Prostate gland (tissue), 2 donors: ENCODE measurements at regions of chr13 and their contacts with region 1.

Region 1: GRCh38 chr13:110915057-110915873 is at the start of gene ANKRD10:
- DNase-seq: peak; percentile 98
- H3K4me3 ChIP-seq: peak within 1 kb of the TSS; percentile 92 to 98
- H3K27ac ChIP-seq: peak within 1 kb of the TSS; percentile 97 to 99
- H3K4me1 ChIP-seq: peaks cover 14% of the 10 kb centered on the region
- H3K27me3 ChIP-seq: no peaks in the 10 kb centered on the region
- CTCF ChIP-seq: peak; percentile 85 to 99 (median 95)
- POLR2A ChIP-seq: peak; percentile 15
- total RNA-seq, gene ANKRD10: 99.9 to 155 TPM

Region 2: DNA sequence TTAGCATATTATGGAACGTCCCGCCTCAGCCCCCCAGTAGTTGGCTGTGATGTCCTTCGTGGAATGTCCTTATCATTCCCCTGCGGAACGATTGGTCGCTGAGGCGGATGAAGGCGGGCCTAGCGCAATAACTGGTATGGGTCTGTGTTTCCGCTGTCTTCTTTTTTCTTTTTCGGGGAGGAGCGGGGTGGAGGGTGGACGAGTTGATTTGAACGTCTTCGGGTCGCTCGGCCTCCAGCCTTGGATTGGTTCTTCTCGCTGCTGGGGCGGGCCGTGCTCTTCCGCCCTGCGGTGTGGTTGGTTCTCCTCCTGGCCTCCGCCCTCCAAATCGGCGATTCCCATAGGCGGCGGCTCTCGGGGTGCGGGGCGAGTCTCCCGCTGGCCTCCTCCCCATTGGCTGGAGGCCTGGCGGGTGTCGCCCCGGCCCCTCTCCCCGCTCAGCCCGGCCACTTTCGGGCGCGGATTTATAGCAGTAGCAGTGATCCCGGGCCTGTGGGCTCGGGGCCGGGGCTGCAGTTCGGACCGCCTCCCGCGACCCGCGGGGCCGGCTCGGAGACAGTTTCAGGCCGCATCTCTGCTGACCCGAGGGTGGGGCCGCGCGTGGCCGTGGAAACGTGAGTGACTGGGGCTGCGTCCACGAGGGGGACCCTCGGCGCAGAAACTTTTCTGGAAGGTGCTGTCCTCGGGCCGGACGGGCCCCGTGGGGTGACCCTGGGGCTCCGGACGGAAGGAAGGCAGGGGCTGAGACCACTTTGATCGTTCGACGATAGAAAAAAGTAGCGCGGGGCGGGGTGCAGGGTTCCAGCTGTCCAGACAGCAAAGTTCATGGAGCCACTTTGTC is 199.7 kb before region 1 on chr13:
- intact Hi-C with region 1: loop called (anchors 2 kb)
- DNase-seq: peak; percentile 99
- H3K4me3 ChIP-seq: peak overlapping the region; percentile 93 to 99
- H3K27ac ChIP-seq: peak overlapping the region; percentile 100
- H3K4me1 ChIP-seq: peaks cover 5% of the 10 kb centered on the region
- H3K27me3 ChIP-seq: no peaks in the 10 kb centered on the region
- CTCF ChIP-seq: peak in 2 of 4 experiments; percentile 13 to 30
- POLR2A ChIP-seq: peak; percentile 98

Region 3: DNA sequence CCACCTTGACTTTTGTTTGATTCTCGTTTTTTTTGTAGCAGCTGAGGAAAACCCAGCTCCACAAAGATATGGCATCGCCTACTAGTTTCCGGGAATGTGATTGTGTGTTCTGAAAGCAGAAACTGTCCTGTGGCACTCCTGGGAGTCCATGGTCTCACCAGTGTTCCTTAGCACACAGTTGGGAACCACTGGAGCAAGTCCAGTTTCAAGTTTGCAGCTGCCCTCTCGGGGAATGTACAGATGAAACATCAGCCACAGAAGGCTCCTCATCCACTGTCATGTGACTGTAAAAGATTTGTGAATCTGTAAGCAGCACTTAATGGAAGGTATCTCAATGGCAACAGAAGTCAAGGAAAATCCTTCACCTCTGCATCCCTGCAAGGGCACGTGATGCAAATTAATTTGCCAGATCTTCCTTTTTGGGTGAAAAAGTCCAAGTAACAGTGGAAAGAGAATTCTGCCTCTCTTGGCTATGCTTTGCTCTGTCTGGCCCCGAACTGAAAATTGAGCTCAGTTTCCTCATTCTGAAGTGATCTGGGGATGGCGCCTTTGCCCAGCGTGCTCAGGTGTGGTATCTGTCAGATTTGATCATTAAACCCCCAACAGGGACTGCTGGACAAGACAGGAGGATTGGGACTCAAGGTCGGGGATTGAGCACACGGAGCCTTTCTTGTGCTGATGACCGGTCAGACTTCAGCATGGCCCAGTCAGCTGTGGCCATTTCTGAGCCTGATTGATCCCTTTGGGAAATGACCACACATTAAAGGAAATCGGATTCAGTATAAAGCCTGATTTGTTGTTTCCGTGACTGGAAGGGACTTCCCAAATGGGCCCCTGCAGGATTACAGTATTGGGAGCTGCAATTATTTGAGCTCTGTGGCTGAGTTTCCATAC is 142.9 kb before region 1 on chr13:
- intact Hi-C with region 1: no loop called
- DNase-seq: no peak
- H3K4me3 ChIP-seq: no peak overlapping the region
- H3K27ac ChIP-seq: no peak overlapping the region
- H3K4me1 ChIP-seq: no peaks in the 10 kb centered on the region
- H3K27me3 ChIP-seq: no peaks in the 10 kb centered on the region
- CTCF ChIP-seq: no peak
- POLR2A ChIP-seq: no peak

Region 4: GRCh38 chr13:110819203-110820014 is 95.9 kb before region 1 on chr13:
- intact Hi-C with region 1: loop called (anchors 5 kb)
- DNase-seq: peak; percentile 67
- H3K4me3 ChIP-seq: no peak overlapping the region
- H3K27ac ChIP-seq: no peak overlapping the region
- H3K4me1 ChIP-seq: no peaks in the 10 kb centered on the region
- H3K27me3 ChIP-seq: no peaks in the 10 kb centered on the region
- CTCF ChIP-seq: peak; percentile 95 to 96 (median 96)
- POLR2A ChIP-seq: no peak

Region 5: DNA sequence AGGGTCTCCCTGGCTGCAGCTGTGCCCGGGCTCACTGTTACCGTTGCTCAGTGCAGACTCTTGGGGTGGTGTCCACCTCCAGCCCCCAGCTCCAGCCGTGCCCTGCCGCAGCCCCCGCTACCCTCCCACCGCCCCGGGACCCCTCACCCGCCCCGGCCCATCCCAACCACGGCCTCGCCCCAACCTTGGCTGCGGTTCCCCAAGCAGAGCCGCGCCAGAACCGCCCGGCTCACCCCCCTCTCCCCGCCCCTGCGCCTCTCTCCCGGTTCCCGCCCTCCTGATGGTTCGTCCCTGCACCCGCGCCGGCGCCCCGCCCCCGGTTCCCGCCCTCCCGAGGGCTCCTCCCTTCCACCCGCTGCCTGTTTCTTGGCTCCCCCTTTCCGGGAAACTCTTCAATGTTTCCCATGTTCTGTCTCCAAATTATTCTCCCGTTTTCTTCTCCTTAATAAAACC is 40.7 kb before region 1 on chr13:
- intact Hi-C with region 1: loop called (anchors 2 kb)
- DNase-seq: peak; percentile 77
- H3K4me3 ChIP-seq: peak overlapping the region; percentile 18 to 33
- H3K27ac ChIP-seq: no peak overlapping the region
- H3K4me1 ChIP-seq: no peaks in the 10 kb centered on the region
- H3K27me3 ChIP-seq: no peaks in the 10 kb centered on the region
- CTCF ChIP-seq: no peak
- POLR2A ChIP-seq: no peak

Region 6: DNA sequence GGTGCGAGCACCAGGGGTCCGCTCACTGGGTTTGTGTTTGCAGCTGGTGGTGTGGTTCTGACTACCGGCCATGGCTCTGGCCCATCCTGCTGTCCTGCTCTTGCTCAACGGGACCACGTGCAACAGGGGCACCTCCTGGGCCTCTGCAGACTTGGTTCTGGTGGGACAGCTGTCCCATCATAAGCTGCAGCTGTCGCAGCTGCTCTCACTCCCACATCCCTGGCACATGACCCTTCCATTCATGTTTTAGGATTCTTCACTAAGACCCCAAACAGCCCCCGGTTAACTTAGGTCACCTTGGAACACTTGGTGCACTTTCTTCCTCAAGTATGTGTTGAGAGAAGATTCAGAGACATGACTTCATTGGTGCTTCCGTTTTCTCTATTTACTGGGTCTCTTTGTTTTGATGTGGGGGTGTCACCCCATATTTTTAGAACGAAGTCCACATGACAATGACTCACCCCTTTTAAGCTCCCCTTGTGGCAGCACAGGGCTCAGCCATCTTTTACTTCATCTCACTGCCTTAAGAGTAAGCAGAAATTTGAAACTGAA is 131.4 kb after region 1 on chr13:
- intact Hi-C with region 1: loop called (anchors 5 kb)
- DNase-seq: no peak
- H3K4me3 ChIP-seq: no peak overlapping the region
- H3K27ac ChIP-seq: no peak overlapping the region
- H3K4me1 ChIP-seq: no peaks in the 10 kb centered on the region
- H3K27me3 ChIP-seq: no peaks in the 10 kb centered on the region
- CTCF ChIP-seq: peak in 1 of 4 experiments; percentile 3
- POLR2A ChIP-seq: no peak

Region 7: DNA sequence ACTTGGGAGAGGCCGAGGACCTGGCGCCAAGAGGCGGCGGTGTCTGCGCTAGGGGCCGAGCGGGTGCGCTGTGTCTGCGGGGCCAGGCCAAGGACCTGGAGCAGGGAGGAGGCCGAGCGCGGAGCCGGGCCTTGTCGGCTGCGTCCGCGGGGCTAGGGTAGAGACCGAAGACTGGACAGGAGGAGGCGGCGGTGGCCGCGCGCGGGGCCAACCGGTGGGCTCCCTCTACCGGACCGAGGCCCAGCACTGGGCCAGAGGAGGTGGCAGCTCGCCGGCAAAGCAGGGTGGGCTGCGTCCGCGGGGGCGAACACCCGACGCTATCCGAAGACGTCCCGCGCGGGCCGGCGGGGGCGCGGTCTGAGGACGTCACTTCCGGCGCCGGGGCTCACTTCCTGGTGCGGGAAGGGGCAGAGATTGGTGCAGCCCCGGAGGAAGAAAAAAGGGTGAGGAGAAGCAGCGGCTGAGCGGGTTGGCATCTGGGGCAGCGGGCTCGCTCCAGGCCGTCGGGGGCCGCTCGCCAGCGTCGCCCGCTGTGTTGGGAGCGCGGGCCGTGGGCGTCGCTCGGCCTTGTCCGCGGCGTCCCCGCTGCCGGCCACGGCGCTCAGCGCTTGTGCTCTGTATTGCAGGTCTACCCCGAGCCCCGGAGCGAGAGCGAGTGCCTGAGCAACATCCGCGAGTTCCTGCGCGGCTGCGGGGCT is 238.2 kb after region 1 on chr13:
- intact Hi-C with region 1: loop called (anchors 2 kb)
- DNase-seq: peak; percentile 89
- H3K4me3 ChIP-seq: peak overlapping the region; percentile 73 to 99
- H3K27ac ChIP-seq: peak overlapping the region; percentile 92 to 96
- H3K4me1 ChIP-seq: peaks cover 6% of the 10 kb centered on the region
- H3K27me3 ChIP-seq: no peaks in the 10 kb centered on the region
- CTCF ChIP-seq: peak in 2 of 4 experiments; percentile 11 to 26
- POLR2A ChIP-seq: no peak

Region 8: GRCh38 chr13:111216166-111216960 is 301.1 kb after region 1 on chr13:
- intact Hi-C with region 1: loop called (anchors 10 kb)
- DNase-seq: no peak
- H3K4me3 ChIP-seq: no peak overlapping the region
- H3K27ac ChIP-seq: no peak overlapping the region
- H3K4me1 ChIP-seq: peaks cover 3% of the 10 kb centered on the region
- H3K27me3 ChIP-seq: no peaks in the 10 kb centered on the region
- CTCF ChIP-seq: peak in 3 of 4 experiments; percentile 38 to 45 (median 38)
- POLR2A ChIP-seq: no peak